Breast epithelium (tissue), 4 donors: ENCODE measurements at regions of chr2 and their contacts with region 1.

Region 1: GRCh38 chr2:237590272-237591140 is at the start of gene RAB17:
- DNase-seq: peak; percentile 76 to 81
- H3K4me3 ChIP-seq: peak within 1 kb of the TSS; percentile 7 to 61 (median 43)
- H3K27ac ChIP-seq: peak within 1 kb of the TSS; percentile 90 to 92
- H3K4me1 ChIP-seq: peaks cover 0 to 17% of the 10 kb centered on the region in 2 donors
- H3K27me3 ChIP-seq: no peaks in the 10 kb centered on the region
- CTCF ChIP-seq: no peak
- POLR2A ChIP-seq: no peak
- total RNA-seq, gene RAB17: 39.7 to 43.9 TPM in 2 of 3 donors, not detected in the other

Region 2: DNA sequence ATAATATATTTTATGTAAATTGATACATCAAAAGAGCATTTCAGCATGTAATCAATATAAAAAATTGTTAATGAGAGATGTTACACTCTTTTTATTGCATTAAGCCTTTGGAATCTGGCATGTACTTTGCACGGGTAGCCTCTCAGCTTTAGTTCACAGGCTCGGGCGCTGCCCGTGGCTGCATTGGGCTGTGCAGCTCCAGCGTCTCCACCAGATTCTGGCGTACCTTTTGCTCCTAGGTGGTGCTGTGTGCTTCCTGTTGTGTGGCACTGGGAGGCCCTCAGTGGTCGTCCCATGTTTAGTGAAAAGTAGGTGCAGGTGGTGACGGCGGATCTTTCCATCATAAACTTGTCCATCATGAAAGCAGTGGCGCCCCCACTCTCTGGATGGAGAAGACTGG is 61.3 kb after region 1 on chr2:
- intact Hi-C with region 1: loop called (anchors 2 kb)
- DNase-seq: no peak
- H3K4me3 ChIP-seq: no peak overlapping the region
- H3K27ac ChIP-seq: no peak overlapping the region
- H3K4me1 ChIP-seq: no peaks in the 10 kb centered on the region
- H3K27me3 ChIP-seq: no peaks in the 10 kb centered on the region
- CTCF ChIP-seq: no peak
- POLR2A ChIP-seq: no peak

Region 3: GRCh38 chr2:238117191-238118154 is 527.0 kb after region 1 on chr2:
- intact Hi-C with region 1: loop called (anchors 5 kb)
- DNase-seq: no peak
- H3K4me3 ChIP-seq: no peak overlapping the region
- H3K27ac ChIP-seq: no peak overlapping the region
- H3K4me1 ChIP-seq: no peaks in the 10 kb centered on the region
- H3K27me3 ChIP-seq: peaks cover 0 to 22% of the 10 kb centered on the region in 2 donors
- CTCF ChIP-seq: no peak
- POLR2A ChIP-seq: no peak